HEK293T (cell line): ENCODE measurements at regions of chr5 and their contacts with region 1.

Region 1: GRCh38 chr5:38809388-38810359 is 36.1 kb upstream of the OSMR start:
- DNase-seq: peak; percentile 77

Region 2: GRCh38 chr5:38420691-38421390 is 388.8 kb before region 1 on chr5:
- CTCF ChIA-PET with region 1: interaction called, 13 read pairs
- POLR2A ChIA-PET with region 1: no interaction called
- DNase-seq: peak; percentile 73